HCT116 (cell line): ENCODE measurements at regions of chr17 and their contacts with region 1.

Region 1: GRCh38 chr17:76278952-76279741 is 14.0 kb downstream of the UBALD2 start:
- DNase-seq: peak; percentile 62
- ATAC-seq: peak; percentile 98
- H3K4me3 ChIP-seq: no peak overlapping the region
- H3K27ac ChIP-seq: no peak overlapping the region; the same call in 1 of the 2 replicates
- H3K4me1 ChIP-seq: peaks cover 0 to 15% of the 10 kb centered on the region in 2 experiments; a peak in 2 of 4 replicates
- H3K27me3 ChIP-seq: no peaks in the 10 kb centered on the region
- CTCF ChIP-seq: peak; percentile 98 to 100 (median 98)
- POLR2A ChIP-seq: no peak
- RAD21 ChIP-seq: peak; percentile 100

Region 2: DNA sequence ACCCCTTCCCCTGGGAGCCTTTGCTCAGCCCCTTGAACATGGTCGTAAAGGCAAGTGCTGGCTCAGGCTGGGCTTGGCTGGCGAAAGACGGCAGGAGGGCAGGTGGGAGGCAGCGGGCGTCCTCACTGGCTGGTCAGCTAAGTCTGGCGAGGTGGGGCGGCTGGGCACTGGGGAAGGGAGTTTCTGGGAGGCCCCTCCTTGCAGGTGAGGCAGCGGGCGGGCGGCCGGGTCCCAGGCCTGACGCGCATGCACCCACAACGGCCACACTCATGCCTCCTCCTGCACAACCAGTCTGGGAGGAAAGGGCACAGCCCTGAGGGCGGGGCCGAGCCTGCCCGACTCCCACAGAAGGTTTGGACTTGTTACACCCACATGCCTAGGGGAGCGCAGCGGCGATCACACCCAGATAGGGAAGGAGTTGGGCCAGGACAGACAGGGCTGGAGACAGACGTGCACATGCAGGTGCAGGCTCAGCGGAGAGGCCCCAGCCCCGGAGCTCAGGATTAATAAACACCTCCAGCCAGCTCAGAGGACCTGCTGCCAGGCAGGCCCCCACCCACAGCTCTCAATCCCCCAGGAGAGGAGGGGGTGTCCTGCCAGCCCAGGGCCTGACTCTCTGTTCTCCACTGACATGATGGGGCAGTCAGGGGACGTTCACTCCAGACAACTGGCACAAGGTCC is 251.8 kb before region 1 on chr17 and contains the start of gene EVPL:
- CTCF ChIA-PET with region 1: interaction called, 4 read pairs
- POLR2A ChIA-PET with region 1: no interaction called
- RAD21 ChIA-PET with region 1: interaction called in 1 of 2 experiments, 3 read pairs
- intact Hi-C with region 1: loop called (anchors 5 kb)
- DNase-seq: peak; percentile 85
- ATAC-seq: peak; percentile 83
- H3K4me3 ChIP-seq: peak within 1 kb of the TSS; percentile 69 to 85
- H3K27ac ChIP-seq: peak within 1 kb of the TSS; percentile 96
- H3K4me1 ChIP-seq: peaks cover 47 to 65% of the 10 kb centered on the region in 2 experiments
- H3K27me3 ChIP-seq: no peaks in the 10 kb centered on the region
- CTCF ChIP-seq: no peak; a peak in 1 of 6 replicates
- POLR2A ChIP-seq: peak; percentile 73
- RAD21 ChIP-seq: no peak
- total RNA-seq, gene EVPL: 58.0 TPM

Region 3: DNA sequence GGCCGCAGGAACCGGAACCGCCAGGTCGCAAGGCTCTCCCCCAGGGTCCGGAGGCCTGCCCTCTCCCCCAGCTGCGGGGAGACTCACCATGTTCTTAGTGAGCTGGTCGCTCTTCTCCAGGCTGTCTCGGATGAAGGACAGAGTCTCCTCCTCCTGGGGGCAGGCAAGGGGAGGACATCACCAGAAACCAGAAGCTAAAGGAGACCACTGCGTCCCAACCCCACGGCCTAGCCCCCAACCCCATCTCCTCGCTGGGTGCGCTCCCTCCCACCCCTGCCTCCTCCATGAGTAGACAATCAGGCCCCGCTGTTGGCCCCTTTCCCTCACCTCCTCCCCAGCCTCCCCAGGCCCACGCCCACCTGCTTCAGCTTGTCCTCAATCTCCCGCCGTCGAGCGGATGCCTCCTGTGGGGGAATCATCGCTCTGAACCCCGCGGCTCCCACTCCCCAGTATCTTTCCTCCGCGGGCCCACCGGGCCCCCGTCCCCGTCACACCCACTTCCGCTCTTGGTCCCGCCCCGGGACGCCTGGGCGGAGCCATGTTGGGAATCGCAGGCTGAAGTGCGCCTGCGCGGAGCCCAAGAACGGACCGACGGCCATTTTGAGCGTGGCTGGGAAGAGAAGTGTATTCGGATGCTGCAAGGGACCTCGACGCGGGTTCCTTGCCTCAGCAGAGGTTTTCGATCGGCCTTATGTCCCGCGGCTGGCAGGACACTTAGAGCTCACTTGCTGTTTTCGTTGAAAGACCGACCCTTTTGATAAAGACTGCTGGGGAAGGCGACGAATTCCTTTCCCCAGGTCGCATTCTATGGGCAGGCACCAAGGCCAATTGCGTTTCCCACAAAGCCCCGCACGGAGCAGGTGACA is 175.6 kb before region 1 on chr17 and contains the start of gene EXOC7:
- CTCF ChIA-PET with region 1: interaction called, 17 read pairs
- POLR2A ChIA-PET with region 1: interaction called, 3 read pairs
- RAD21 ChIA-PET with region 1: no interaction called
- intact Hi-C with region 1: no loop called
- DNase-seq: peak; percentile 90
- ATAC-seq: peak; percentile 83
- H3K4me3 ChIP-seq: peak within 1 kb of the TSS; percentile 78 to 95
- H3K27ac ChIP-seq: peak within 1 kb of the TSS; percentile 89
- H3K4me1 ChIP-seq: peaks cover 12 to 26% of the 10 kb centered on the region in 2 experiments
- H3K27me3 ChIP-seq: no peaks in the 10 kb centered on the region
- CTCF ChIP-seq: no peak
- POLR2A ChIP-seq: peak; percentile 98
- RAD21 ChIP-seq: no peak
- total RNA-seq, gene EXOC7: 114 TPM

Region 4: DNA sequence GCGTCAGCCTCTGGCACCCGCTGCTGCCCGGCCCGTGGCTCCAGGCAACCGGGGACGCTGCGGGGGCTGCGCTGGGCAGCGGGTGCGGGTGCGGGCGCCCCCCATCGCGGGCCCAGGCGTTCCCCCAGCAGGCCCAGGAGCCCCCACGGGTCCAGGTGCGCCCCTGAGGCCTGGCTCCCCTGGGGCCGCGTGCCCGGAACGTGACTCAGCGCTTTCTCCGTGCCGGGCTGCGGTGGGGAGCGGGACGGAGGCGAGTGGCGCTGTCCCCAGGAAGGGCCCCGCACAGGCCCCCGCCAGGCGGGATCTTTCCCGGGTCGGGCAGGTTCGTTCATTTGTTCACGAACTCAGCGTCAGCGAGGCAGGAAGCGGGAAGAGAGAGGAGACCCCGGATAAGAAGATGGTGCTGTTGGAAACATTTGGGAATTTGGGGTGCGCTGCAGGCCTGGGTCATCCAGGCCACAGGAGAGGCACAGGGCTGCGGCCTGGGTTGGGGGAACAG is 157.2 kb before region 1 on chr17:
- CTCF ChIA-PET with region 1: interaction called, 132 read pairs
- POLR2A ChIA-PET with region 1: interaction called, 5 read pairs
- RAD21 ChIA-PET with region 1: interaction called, 7 to 8 read pairs
- intact Hi-C with region 1: loop called (anchors 1 kb)
- DNase-seq: no peak
- ATAC-seq: no peak
- H3K4me3 ChIP-seq: no peak overlapping the region
- H3K27ac ChIP-seq: peak overlapping the region; percentile 47; the same call in 1 of the 2 replicates
- H3K4me1 ChIP-seq: peaks cover 0 to 15% of the 10 kb centered on the region in 2 experiments; a peak in 2 of 4 replicates
- H3K27me3 ChIP-seq: no peaks in the 10 kb centered on the region
- CTCF ChIP-seq: no peak
- POLR2A ChIP-seq: no peak
- RAD21 ChIP-seq: no peak

Region 5: GRCh38 chr17:76182016-76182764 is 97.0 kb before region 1 on chr17:
- CTCF ChIA-PET with region 1: interaction called, 8 read pairs
- POLR2A ChIA-PET with region 1: no interaction called
- RAD21 ChIA-PET with region 1: interaction called, 4 to 6 read pairs
- intact Hi-C with region 1: loop called (anchors 1 kb)
- DNase-seq: peak; percentile 99
- ATAC-seq: peak; percentile 85
- H3K4me3 ChIP-seq: no peak overlapping the region
- H3K27ac ChIP-seq: no peak overlapping the region
- H3K4me1 ChIP-seq: peaks cover 17 to 34% of the 10 kb centered on the region in 2 experiments
- H3K27me3 ChIP-seq: no peaks in the 10 kb centered on the region
- CTCF ChIP-seq: peak; percentile 94 to 98 (median 96)
- POLR2A ChIP-seq: peak; percentile 42
- RAD21 ChIP-seq: peak; percentile 86

Region 6: DNA sequence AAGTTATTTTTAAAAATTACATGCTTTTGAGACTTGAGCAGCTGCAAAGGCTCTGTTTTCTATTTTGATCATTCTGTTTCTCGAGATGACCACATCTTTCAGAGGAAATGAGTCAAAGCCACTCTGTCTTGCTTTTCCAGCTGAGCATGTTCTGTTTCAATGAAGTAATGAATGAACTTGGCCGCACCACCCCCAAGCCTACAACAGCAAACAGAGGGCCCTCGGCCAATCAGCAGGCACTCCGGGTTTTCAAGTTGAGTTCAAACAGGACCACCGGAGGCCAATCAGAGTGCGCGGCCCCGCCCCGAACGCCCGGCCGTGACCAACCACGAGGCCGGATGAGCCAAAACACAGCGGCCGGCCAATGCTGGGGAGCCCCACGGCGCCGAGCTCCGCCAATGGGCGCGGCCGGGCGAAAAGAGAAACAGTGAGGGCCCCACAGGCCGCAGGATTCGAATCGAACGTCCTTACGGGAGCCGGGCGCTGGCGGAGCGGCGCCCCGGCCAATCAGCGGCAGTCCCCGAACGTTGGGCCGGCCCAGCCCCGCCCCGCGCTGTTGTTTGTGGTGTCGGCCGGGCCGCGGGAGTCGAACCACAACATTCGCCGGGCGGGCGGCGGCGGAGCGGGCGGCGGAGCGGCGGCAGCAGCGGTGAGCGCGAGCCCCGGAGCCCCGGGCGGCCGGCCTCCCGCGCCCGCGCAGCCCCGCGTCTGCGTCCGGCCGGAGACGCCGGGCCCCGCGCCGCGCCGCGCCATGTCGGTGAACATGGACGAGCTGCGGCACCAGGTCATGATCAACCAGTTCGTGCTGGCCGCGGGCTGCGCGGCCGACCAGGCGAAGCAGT is 14.2 kb before region 1 on chr17 and contains the start of gene UBALD2:
- CTCF ChIA-PET with region 1: interaction called, 34 read pairs
- POLR2A ChIA-PET with region 1: interaction called, 3 read pairs
- RAD21 ChIA-PET with region 1: interaction called in 1 of 2 experiments, 3 read pairs
- intact Hi-C with region 1: no loop called
- DNase-seq: peak; percentile 99
- ATAC-seq: peak; percentile 96
- H3K4me3 ChIP-seq: peak within 1 kb of the TSS; percentile 70 to 82
- H3K27ac ChIP-seq: peak within 1 kb of the TSS; percentile 68
- H3K4me1 ChIP-seq: peaks cover 25 to 39% of the 10 kb centered on the region in 2 experiments
- H3K27me3 ChIP-seq: no peaks in the 10 kb centered on the region
- CTCF ChIP-seq: no peak
- POLR2A ChIP-seq: peak; percentile 69
- RAD21 ChIP-seq: no peak
- total RNA-seq, gene UBALD2: 94.3 TPM

Region 7: GRCh38 chr17:76452660-76453430 is 173.7 kb after region 1 on chr17 and contains the start of gene UBE2O:
- CTCF ChIA-PET with region 1: no interaction called
- POLR2A ChIA-PET with region 1: no interaction called
- RAD21 ChIA-PET with region 1: no interaction called
- intact Hi-C with region 1: no loop called
- DNase-seq: peak; percentile 86
- ATAC-seq: peak; percentile 95
- H3K4me3 ChIP-seq: peak within 1 kb of the TSS; percentile 89 to 96
- H3K27ac ChIP-seq: peak within 1 kb of the TSS; percentile 89
- H3K4me1 ChIP-seq: peaks cover 23 to 41% of the 10 kb centered on the region in 2 experiments
- H3K27me3 ChIP-seq: no peaks in the 10 kb centered on the region
- CTCF ChIP-seq: peak in 1 of 3 experiments; percentile 41; a peak in 2 of 6 replicates
- POLR2A ChIP-seq: peak; percentile 52
- RAD21 ChIP-seq: no peak
- total RNA-seq, gene UBE2O: 59.1 TPM

Region 8: DNA sequence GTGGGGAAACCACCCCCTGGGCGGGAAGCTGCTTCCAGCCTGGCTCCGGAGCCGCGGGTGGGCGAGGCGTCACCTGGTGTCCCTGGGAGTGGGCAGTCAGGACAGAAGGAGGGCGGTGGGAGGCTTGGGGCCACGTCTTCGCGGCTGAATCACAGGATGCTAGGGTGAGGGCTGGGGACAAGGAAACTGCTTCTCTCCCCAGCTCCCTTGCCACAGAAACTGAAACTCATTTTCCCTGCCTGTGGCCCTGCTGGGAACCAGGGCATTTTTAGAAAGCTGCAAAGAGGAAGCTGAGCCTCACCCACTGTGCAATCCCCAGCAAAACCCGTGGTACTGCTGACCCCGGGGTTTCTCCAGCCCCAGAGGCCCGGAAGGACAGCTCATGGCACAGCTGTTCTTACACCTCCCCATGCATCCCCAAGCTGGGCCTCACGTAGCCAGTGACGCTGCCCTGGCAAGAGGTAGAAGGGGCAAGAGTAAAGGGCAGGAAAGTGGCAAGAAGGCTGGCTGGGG is 213.9 kb after region 1 on chr17:
- CTCF ChIA-PET with region 1: no interaction called
- POLR2A ChIA-PET with region 1: no interaction called
- RAD21 ChIA-PET with region 1: no interaction called
- intact Hi-C with region 1: no loop called
- DNase-seq: no peak
- ATAC-seq: no peak
- H3K4me3 ChIP-seq: no peak overlapping the region
- H3K27ac ChIP-seq: no peak overlapping the region
- H3K4me1 ChIP-seq: peaks cover 4 to 41% of the 10 kb centered on the region in 2 experiments; a peak in 2 of 4 replicates
- H3K27me3 ChIP-seq: no peaks in the 10 kb centered on the region
- CTCF ChIP-seq: no peak
- POLR2A ChIP-seq: no peak
- RAD21 ChIP-seq: no peak

Region 9: DNA sequence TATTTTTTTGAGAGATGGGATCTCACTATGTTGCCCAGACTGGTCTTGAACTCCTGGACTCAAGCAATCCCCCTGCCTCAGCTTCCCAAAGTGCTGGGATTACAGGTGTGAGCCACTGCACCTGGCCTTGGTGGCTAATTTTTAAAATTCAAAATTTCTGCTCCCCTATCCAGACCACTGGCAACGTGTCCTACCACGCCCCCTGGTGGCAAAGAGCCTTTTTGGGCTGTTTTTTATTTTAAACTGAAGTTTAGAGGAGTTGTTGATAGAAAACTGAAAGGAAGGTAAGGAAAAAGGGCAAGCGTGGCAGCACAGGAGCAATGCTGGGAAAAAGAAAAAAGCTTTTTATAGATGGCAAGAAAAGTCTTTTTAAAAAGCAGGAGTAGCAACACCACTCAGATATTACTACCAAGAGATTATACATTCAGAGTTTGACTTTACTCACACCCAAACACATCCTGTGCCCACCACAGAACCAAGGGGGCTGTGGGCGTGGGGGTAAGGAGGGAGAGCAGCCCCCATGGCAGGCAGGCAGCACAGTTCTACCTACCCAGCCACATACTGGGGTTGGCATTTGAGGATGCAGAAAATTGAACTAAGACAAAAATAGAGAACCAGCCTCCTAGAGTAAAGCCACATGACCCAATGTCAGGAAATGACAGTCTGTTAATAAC is 435.8 kb after region 1 on chr17:
- CTCF ChIA-PET with region 1: no interaction called
- POLR2A ChIA-PET with region 1: no interaction called
- RAD21 ChIA-PET with region 1: no interaction called
- intact Hi-C with region 1: no loop called
- DNase-seq: no peak
- ATAC-seq: peak; percentile 28
- H3K4me3 ChIP-seq: no peak overlapping the region
- H3K27ac ChIP-seq: 0 out of 2 replicates have a peak overlapping the region, but pooled peaks have one; percentile 0
- H3K4me1 ChIP-seq: peaks cover 9 to 14% of the 10 kb centered on the region in 2 experiments
- H3K27me3 ChIP-seq: no peaks in the 10 kb centered on the region
- CTCF ChIP-seq: peak; percentile 87 to 97 (median 88)
- POLR2A ChIP-seq: no peak
- RAD21 ChIP-seq: peak; percentile 83